WTC11 (cell line): ENCODE measurements at regions of chr7 and their contacts with region 1.

Region 1: GRCh38 chr7:142385491-142386340 is 127.9 kb upstream of the PRSS58 start:
- DNase-seq: peak; percentile 57
- ATAC-seq: peak; percentile 90
- H3K4me3 Mint-ChIP-seq: no peak overlapping the region
- H3K27ac Mint-ChIP-seq: no peak overlapping the region
- H3K4me1 Mint-ChIP-seq: peaks cover 14% of the 10 kb centered on the region
- H3K27me3 Mint-ChIP-seq: peaks cover 7% of the 10 kb centered on the region
- CTCF ChIP-seq: peak; percentile 66

Region 2: DNA sequence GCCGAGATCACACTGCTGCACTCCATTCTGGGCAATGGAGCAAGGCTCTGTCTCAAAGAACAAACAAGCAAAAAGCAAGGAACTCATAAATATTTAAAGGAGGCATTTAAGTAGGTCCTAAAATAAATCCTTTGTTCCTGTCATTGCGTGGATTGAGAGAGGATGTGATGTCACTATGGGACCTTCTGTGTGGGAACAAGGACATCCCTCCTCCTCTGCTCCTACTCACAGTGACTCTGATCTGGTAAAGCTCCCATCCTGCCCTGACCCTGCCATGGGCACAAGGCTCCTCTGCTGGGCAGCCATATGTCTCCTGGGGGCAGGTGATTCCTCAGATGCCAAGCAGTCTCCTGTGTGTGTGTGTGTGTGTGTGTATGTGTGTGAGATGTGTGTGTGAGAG is 53.8 kb before region 1 on chr7:
- CTCF ChIA-PET with region 1: no interaction called
- POLR2A ChIA-PET with region 1: no interaction called
- DNase-seq: no peak
- ATAC-seq: no peak
- H3K4me3 Mint-ChIP-seq: no peak overlapping the region
- H3K27ac Mint-ChIP-seq: no peak overlapping the region
- H3K4me1 Mint-ChIP-seq: peaks cover 20% of the 10 kb centered on the region
- H3K27me3 Mint-ChIP-seq: no peaks in the 10 kb centered on the region
- CTCF ChIP-seq: no peak

Region 3: GRCh38 chr7:142357953-142358520 is 27.7 kb before region 1 on chr7:
- CTCF ChIA-PET with region 1: interaction called, 10 read pairs
- POLR2A ChIA-PET with region 1: no interaction called
- DNase-seq: peak; percentile 28
- ATAC-seq: peak; percentile 92
- H3K4me3 Mint-ChIP-seq: no peak overlapping the region
- H3K27ac Mint-ChIP-seq: no peak overlapping the region
- H3K4me1 Mint-ChIP-seq: peaks cover 34% of the 10 kb centered on the region
- H3K27me3 Mint-ChIP-seq: peaks cover 12% of the 10 kb centered on the region
- CTCF ChIP-seq: peak; percentile 71